T-cell (primary cell): ENCODE measurements at regions of chr1 and their contacts with region 1.

Region 1: GRCh38 chr1:39196244-39197215 is 8.0 kb upstream of the MACF1 start:
- DNase-seq: peak; percentile 28 to 85 (median 59)
- ATAC-seq: peak; percentile 70 to 87 (median 72)
- H3K4me3 ChIP-seq: peak overlapping the region in 1 of 2 donors; percentile 20
- H3K4me3 Mint-ChIP-seq: peak overlapping the region; percentile 64 to 74 (median 64)
- H3K27ac ChIP-seq: peak overlapping the region; percentile 82
- H3K27ac Mint-ChIP-seq: peak overlapping the region; percentile 93 to 96
- H3K4me1 ChIP-seq: peaks cover 60 to 71% of the 10 kb centered on the region in 2 experiments
- H3K4me1 Mint-ChIP-seq: peaks cover 83 to 88% (median 85%) of the 10 kb centered on the region in 3 donors
- H3K27me3 ChIP-seq: no peaks in the 10 kb centered on the region
- H3K27me3 Mint-ChIP-seq: no peaks in the 10 kb centered on the region

Region 2: DNA sequence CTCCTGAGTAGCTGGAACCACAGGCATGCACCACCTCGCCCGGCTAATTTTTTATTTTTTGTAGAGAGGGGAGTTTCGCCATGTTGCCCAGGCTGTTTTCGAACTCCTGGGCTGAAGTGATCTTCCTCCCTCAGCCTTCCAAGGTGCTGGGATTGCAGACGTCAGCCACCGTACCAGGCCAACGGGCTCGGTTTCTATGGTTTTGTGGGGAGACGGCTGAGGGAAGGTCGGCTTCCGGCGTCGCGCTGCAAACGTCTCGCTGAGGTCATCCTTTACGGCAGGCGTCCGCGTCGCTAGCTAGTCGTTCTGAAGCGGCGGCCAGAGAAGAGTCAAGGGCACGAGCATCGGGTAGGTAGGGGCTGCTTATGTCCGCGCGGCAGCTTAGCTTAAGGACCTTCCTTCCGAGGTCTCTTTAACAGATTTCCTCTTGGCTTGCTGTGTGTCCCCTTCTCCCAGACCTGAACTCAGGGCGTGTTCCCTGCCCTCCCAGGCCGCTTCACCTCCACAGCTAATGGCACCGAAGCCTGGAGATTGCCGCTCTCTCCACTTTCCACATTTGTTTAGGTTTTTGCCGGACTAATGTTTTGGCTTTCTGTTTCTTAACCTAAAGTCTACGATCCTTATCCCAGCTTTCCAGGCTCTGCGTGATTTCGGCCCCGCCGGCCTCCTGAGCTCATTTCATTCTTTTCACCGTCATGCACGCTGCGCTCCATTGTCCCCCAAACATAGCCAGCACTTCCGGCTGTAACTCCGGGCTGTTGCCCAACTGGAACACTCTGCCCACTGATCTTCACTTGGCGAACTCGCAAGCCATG is 170.3 kb before region 1 on chr1 and contains the start of gene NDUFS5:
- CTCF ChIA-PET with region 1: interaction called in 1 of 2 experiments, 9 read pairs
- POLR2A ChIA-PET with region 1: interaction called in 1 of 2 experiments, 12 read pairs
- DNase-seq: peak; percentile 62 to 91 (median 78)
- ATAC-seq: peak; percentile 91 to 97 (median 92)
- H3K4me3 ChIP-seq: peak within 1 kb of the TSS; percentile 77 to 100
- H3K4me3 Mint-ChIP-seq: peak within 1 kb of the TSS; percentile 96 to 97 (median 96)
- H3K27ac ChIP-seq: peak within 1 kb of the TSS; percentile 86
- H3K27ac Mint-ChIP-seq: peak within 1 kb of the TSS; percentile 94 to 98
- H3K4me1 ChIP-seq: peaks cover 4 to 30% of the 10 kb centered on the region in 2 experiments
- H3K4me1 Mint-ChIP-seq: peaks cover 29 to 41% (median 38%) of the 10 kb centered on the region in 3 donors
- H3K27me3 ChIP-seq: no peaks in the 10 kb centered on the region
- H3K27me3 Mint-ChIP-seq: no peaks in the 10 kb centered on the region
- total RNA-seq, gene NDUFS5: 95.3 to 120 (median 101) TPM

Region 3: DNA sequence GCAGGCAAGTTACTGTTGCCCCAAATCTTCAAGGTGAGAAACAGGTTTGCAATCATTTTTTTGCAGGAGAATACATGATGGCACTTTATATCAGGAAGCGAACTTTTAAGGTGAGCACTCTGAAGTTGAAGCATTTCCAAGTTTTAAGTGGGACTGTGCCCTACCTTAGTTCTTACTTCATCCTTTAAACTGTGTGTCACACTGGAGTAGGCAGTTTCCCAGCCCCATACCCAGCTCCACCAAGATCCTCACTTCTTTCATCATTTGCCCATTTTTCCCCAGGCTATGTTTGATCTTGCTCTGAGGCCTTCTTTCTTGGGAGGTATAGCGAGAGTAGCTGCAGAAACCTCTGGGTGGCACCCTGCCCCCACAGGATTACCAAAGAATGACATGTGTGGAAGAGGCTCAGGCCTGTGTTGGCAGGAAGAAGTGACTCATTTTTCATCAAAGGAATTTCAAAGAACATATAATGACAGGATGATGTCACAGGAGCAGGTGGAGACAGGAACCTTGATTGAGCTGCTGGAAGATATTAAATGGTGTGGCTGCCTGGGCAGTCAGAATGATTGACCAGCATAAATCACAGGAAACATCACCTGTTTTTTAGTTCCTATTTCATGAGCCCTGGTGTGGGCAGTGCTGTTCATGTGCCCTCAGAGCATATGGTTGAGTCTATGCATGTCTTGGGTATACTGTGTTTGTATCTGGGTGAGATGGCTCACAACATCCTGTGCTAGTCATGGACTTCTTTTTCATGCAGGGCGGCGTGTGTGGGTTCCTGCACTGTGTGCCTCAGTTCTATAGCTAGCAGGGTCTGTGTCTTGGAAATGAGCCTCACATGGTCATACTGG is 12.8 kb before region 1 on chr1:
- CTCF ChIA-PET with region 1: interaction called, 4 to 53 read pairs
- POLR2A ChIA-PET with region 1: interaction called in 1 of 2 experiments, 3 read pairs
- DNase-seq: peak; percentile 63 to 90 (median 79)
- ATAC-seq: peak; percentile 89 to 93 (median 90)
- H3K4me3 ChIP-seq: no peak overlapping the region
- H3K4me3 Mint-ChIP-seq: peak overlapping the region in 2 of 3 donors; percentile 2 to 39
- H3K27ac ChIP-seq: peak overlapping the region; percentile 83
- H3K27ac Mint-ChIP-seq: peak overlapping the region; percentile 96
- H3K4me1 ChIP-seq: peaks cover 11 to 19% of the 10 kb centered on the region in 2 experiments
- H3K4me1 Mint-ChIP-seq: peaks cover 33 to 46% (median 46%) of the 10 kb centered on the region in 3 donors
- H3K27me3 ChIP-seq: no peaks in the 10 kb centered on the region
- H3K27me3 Mint-ChIP-seq: no peaks in the 10 kb centered on the region

Region 4: GRCh38 chr1:39238476-39238875 is 41.9 kb after region 1 on chr1:
- CTCF ChIA-PET with region 1: interaction called in 1 of 2 experiments, 41 read pairs
- POLR2A ChIA-PET with region 1: interaction called in 1 of 2 experiments, 5 read pairs
- DNase-seq: no peak
- ATAC-seq: peak in 1 of 4 experiments; percentile 41
- H3K4me3 ChIP-seq: no peak overlapping the region
- H3K4me3 Mint-ChIP-seq: peak overlapping the region in 1 of 3 donors; percentile 25
- H3K27ac ChIP-seq: no peak overlapping the region
- H3K27ac Mint-ChIP-seq: peak overlapping the region; percentile 87 to 90
- H3K4me1 ChIP-seq: peaks cover 4 to 12% of the 10 kb centered on the region in 2 experiments
- H3K4me1 Mint-ChIP-seq: peaks cover 48 to 65% (median 59%) of the 10 kb centered on the region in 3 donors
- H3K27me3 ChIP-seq: no peaks in the 10 kb centered on the region
- H3K27me3 Mint-ChIP-seq: no peaks in the 10 kb centered on the region

Region 5: GRCh38 chr1:39268112-39268581 is 71.6 kb after region 1 on chr1:
- CTCF ChIA-PET with region 1: interaction called, 11 to 364 read pairs
- POLR2A ChIA-PET with region 1: no interaction called
- DNase-seq: peak in 4 of 35 experiments; percentile 6 to 45 (median 11)
- ATAC-seq: peak in 3 of 4 experiments; percentile 55 to 62 (median 58)
- H3K4me3 ChIP-seq: no peak overlapping the region
- H3K4me3 Mint-ChIP-seq: peak overlapping the region; percentile 72 to 76 (median 73)
- H3K27ac ChIP-seq: no peak overlapping the region
- H3K27ac Mint-ChIP-seq: peak overlapping the region; percentile 69 to 93
- H3K4me1 ChIP-seq: peaks cover 8 to 28% of the 10 kb centered on the region in 2 experiments
- H3K4me1 Mint-ChIP-seq: peaks cover 78 to 90% (median 82%) of the 10 kb centered on the region in 3 donors
- H3K27me3 ChIP-seq: no peaks in the 10 kb centered on the region
- H3K27me3 Mint-ChIP-seq: no peaks in the 10 kb centered on the region

Region 6: DNA sequence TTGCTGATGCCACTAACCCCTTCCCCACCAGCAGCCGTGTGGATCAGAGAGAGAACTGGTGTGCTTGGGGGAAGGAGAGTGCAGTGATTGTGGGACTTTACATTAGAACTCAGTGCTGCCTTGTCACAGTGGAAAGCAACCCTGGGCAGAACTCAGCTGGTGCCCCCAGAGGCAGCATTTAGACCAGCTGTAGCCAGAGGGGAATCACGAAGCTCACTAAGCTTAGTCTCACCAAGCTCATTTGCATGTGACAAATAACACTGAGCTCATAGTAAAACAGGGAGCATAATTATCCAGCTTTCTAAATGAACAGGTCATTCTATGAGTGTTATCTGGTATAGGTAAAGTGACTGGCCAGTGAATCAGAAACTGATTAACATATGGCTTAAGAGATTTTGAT is 1167.2 kb after region 1 on chr1:
- CTCF ChIA-PET with region 1: no interaction called
- POLR2A ChIA-PET with region 1: interaction called in 1 of 2 experiments, 14 read pairs
- DNase-seq: no peak
- ATAC-seq: no peak
- H3K4me3 ChIP-seq: no peak overlapping the region
- H3K4me3 Mint-ChIP-seq: no peak overlapping the region
- H3K27ac ChIP-seq: no peak overlapping the region
- H3K27ac Mint-ChIP-seq: no peak overlapping the region
- H3K4me1 ChIP-seq: no peaks in the 10 kb centered on the region
- H3K4me1 Mint-ChIP-seq: peaks cover 0 to 6% (median 4%) of the 10 kb centered on the region in 3 donors
- H3K27me3 ChIP-seq: peaks cover 0 to 11% of the 10 kb centered on the region in 2 experiments
- H3K27me3 Mint-ChIP-seq: no peaks in the 10 kb centered on the region